CD8-positive, alpha-beta T cell (primary cell): ENCODE measurements at regions of chr5 and their contacts with region 1.

Region 1: DNA sequence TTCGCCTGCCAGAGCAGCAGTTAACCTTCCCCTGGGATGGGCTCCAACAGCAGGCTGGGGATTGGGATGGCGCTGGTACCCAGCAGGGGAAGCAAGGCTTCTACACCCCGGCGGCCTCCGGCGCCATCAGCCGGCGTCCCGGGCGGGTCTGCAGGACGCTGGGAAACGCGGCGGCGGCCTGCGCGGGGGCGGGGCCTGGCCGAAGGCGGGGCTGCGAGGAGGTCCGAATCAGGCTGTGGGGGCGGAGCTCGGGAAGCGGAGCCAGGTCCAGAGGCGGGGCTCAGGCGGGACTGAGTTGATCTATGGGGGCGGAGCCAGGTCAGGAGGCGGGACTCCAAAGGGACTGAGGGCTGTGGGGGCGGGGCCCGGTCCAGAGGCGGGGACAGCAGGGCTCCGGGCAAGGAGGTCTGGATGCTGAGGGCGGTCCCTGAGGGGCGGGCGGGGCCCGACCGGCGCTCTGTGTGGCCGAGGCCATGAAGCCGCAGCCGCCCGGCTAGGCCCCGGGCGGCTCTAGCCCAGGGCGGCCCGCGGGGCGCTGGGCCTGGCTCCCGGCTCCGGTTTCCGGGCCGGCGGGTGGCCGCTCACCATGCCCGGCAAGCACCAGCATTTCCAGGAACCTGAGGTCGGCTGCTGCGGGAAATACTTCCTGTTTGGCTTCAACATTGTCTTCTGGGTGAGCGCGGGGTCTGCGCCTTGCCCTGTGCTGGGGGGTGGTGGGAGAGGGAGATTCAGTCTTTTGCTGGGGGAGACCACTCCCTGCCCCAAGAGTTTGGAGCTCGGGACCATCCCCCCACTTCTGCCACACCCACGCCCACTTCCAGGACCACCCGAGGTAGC is at the start of gene TSPAN17:
- DNase-seq: peak; percentile 93 to 99 (median 99)
- ATAC-seq: peak; percentile 89
- H3K4me3 ChIP-seq: peak within 1 kb of the TSS; percentile 66 to 67
- H3K4me3 Mint-ChIP-seq: peak within 1 kb of the TSS; percentile 89
- H3K27ac ChIP-seq: peak within 1 kb of the TSS; percentile 45 to 72
- H3K27ac Mint-ChIP-seq: peak within 1 kb of the TSS; percentile 90
- H3K4me1 ChIP-seq: peaks cover 50% of the 10 kb centered on the region
- H3K4me1 Mint-ChIP-seq: peaks cover 53% of the 10 kb centered on the region
- H3K27me3 ChIP-seq: no peaks in the 10 kb centered on the region
- H3K27me3 Mint-ChIP-seq: no peaks in the 10 kb centered on the region
- CTCF ChIP-seq: no peak
- total RNA-seq, gene TSPAN17: 9.5 to 9.8 TPM

Region 2: DNA sequence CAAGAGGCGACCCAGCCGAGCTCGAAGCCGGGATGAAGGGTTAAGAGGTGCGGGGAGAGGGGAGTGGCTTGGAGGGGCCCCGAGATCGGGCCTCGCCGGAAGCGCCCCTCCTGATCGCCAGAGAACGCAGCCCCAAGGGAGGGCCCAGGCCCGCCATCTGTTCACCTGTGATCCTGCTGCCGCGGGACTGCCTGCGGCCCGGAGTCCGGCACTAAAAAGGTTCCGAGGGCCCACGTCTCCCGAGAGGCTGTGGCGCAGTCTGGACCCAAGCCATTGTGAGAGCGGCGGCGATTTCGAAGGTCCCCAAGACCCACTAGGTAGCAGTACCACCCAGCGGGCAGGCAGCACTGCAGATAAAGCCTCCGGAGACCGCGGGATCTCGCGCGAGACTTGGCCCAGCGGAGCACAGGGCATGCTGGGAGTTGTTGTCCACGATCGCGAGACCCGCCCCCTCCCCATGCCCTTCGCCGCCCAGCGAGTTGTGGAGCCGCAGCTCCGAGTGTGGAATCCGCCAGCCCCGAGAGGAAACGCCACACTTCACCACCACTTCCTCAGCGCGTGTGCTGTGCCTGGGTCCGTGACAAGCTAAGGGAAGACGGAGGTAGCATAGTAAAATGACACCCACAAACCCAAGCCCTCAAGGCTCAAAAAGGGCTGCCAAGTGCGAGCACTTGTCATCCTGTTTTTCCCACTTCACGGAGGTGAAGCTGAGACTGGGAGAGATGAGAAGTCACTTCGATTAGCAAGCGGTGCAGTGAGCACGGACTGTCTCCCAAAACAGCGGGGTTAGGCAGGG is 285.6 kb before region 1 on chr5 and contains the start of gene KIAA1191:
- CTCF ChIA-PET with region 1: interaction called, 5 read pairs
- POLR2A ChIA-PET with region 1: interaction called, 3 read pairs
- intact Hi-C with region 1: loop called in 1 of 2 experiments (anchors 5 kb)
- DNase-seq: peak; percentile 91 to 98 (median 95)
- ATAC-seq: peak; percentile 89
- H3K4me3 ChIP-seq: peak within 1 kb of the TSS; percentile 72 to 96
- H3K4me3 Mint-ChIP-seq: peak within 1 kb of the TSS; percentile 98
- H3K27ac ChIP-seq: peak within 1 kb of the TSS; percentile 68 to 86
- H3K27ac Mint-ChIP-seq: peak within 1 kb of the TSS; percentile 98
- H3K4me1 ChIP-seq: peaks cover 31% of the 10 kb centered on the region
- H3K4me1 Mint-ChIP-seq: peaks cover 41% of the 10 kb centered on the region
- H3K27me3 ChIP-seq: no peaks in the 10 kb centered on the region
- H3K27me3 Mint-ChIP-seq: no peaks in the 10 kb centered on the region
- CTCF ChIP-seq: no peak
- total RNA-seq, gene KIAA1191: 78.2 to 85.1 TPM

Region 3: GRCh38 chr5:176447982-176448608 is 199.2 kb before region 1 on chr5 and contains the start of gene FAF2:
- CTCF ChIA-PET with region 1: no interaction called
- POLR2A ChIA-PET with region 1: no interaction called
- intact Hi-C with region 1: loop called in 1 of 2 experiments (anchors 2 kb)
- DNase-seq: peak; percentile 94 to 100 (median 98)
- ATAC-seq: peak; percentile 96
- H3K4me3 ChIP-seq: peak within 1 kb of the TSS; percentile 75 to 86
- H3K4me3 Mint-ChIP-seq: peak within 1 kb of the TSS; percentile 99
- H3K27ac ChIP-seq: peak within 1 kb of the TSS; percentile 89 to 90
- H3K27ac Mint-ChIP-seq: peak within 1 kb of the TSS; percentile 99
- H3K4me1 ChIP-seq: peaks cover 26% of the 10 kb centered on the region
- H3K4me1 Mint-ChIP-seq: peaks cover 38% of the 10 kb centered on the region
- H3K27me3 ChIP-seq: no peaks in the 10 kb centered on the region
- H3K27me3 Mint-ChIP-seq: no peaks in the 10 kb centered on the region
- CTCF ChIP-seq: peak; percentile 92
- total RNA-seq, gene FAF2: 24.7 to 24.8 TPM

Region 4: GRCh38 chr5:176609724-176610434 is 37.4 kb before region 1 on chr5 and contains the start of gene GPRIN1:
- CTCF ChIA-PET with region 1: no interaction called
- POLR2A ChIA-PET with region 1: no interaction called
- intact Hi-C with region 1: loop called (anchors 2 to 5 kb)
- DNase-seq: peak in 7 of 9 experiments; percentile 38 to 71 (median 47)
- ATAC-seq: peak; percentile 69
- H3K4me3 ChIP-seq: peak within 1 kb of the TSS; percentile 53 to 65
- H3K4me3 Mint-ChIP-seq: peak within 1 kb of the TSS; percentile 90
- H3K27ac ChIP-seq: no peak within 1 kb of the TSS
- H3K27ac Mint-ChIP-seq: no peak within 1 kb of the TSS
- H3K4me1 ChIP-seq: peaks cover 7% of the 10 kb centered on the region
- H3K4me1 Mint-ChIP-seq: peaks cover 9% of the 10 kb centered on the region
- H3K27me3 ChIP-seq: peaks cover 0 to 5% of the 10 kb centered on the region in 2 experiments
- H3K27me3 Mint-ChIP-seq: peaks cover 27% of the 10 kb centered on the region
- CTCF ChIP-seq: no peak
- total RNA-seq, gene GPRIN1: 0.14 to 0.16 TPM

Region 5: GRCh38 chr5:176660860-176661641 is 13.8 kb after region 1 on chr5:
- CTCF ChIA-PET with region 1: interaction called, 72 read pairs
- POLR2A ChIA-PET with region 1: interaction called, 21 read pairs
- intact Hi-C with region 1: loop called in 1 of 2 experiments (anchors 2 kb)
- DNase-seq: peak; percentile 51 to 88 (median 77)
- ATAC-seq: peak; percentile 75
- H3K4me3 ChIP-seq: no peak overlapping the region
- H3K4me3 Mint-ChIP-seq: peak overlapping the region; percentile 42
- H3K27ac ChIP-seq: no peak overlapping the region
- H3K27ac Mint-ChIP-seq: peak overlapping the region; percentile 70
- H3K4me1 ChIP-seq: peaks cover 27% of the 10 kb centered on the region
- H3K4me1 Mint-ChIP-seq: peaks cover 30% of the 10 kb centered on the region
- H3K27me3 ChIP-seq: no peaks in the 10 kb centered on the region
- H3K27me3 Mint-ChIP-seq: peaks cover 8% of the 10 kb centered on the region
- CTCF ChIP-seq: peak; percentile 98

Region 6: DNA sequence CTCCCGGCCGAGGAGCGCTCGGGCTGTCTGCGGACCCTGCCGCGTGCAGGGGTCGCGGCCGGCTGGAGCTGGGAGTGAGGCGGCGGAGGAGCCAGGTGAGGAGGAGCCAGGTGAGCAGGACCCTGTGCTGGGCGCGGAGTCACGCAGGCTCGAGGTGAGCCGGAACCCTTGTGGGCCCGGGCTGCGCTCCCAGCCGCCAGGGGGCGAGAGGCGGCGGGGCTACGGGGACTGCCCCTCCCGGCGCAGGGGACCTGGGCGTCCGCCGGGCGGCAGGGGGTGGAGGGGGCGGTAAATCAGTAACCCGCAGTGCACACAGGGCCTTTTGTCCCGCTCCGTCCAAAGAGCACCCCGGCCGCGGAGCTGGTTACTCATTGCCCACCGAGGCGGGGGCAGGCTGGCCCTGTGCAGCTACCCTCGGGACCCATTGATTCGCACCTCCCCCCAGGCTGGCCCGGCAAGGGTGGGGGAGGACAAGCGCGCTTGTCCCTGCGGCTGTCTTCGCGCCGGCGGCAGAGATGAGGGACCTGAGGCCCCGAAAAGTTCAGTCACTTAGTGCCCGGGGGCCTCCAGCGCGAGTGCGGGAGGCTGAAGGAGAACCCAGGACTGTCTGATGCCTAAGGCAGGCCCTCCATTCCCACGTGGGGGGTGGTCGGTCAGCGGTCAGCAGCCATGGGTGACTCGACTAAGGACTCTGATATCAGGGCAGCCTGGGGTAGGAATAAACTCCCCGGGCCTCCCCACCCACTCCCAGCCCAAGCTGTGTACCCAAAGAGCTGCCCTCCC is 439.9 kb after region 1 on chr5:
- CTCF ChIA-PET with region 1: no interaction called
- POLR2A ChIA-PET with region 1: no interaction called
- intact Hi-C with region 1: loop called in 1 of 2 experiments (anchors 5 kb)
- DNase-seq: peak; percentile 35 to 83 (median 70)
- ATAC-seq: peak; percentile 82
- H3K4me3 ChIP-seq: peak overlapping the region; percentile 43 to 49
- H3K4me3 Mint-ChIP-seq: peak overlapping the region; percentile 49
- H3K27ac ChIP-seq: no peak overlapping the region
- H3K27ac Mint-ChIP-seq: no peak overlapping the region
- H3K4me1 ChIP-seq: peaks cover 10% of the 10 kb centered on the region
- H3K4me1 Mint-ChIP-seq: peaks cover 8% of the 10 kb centered on the region
- H3K27me3 ChIP-seq: peaks cover 0 to 2% of the 10 kb centered on the region in 2 experiments
- H3K27me3 Mint-ChIP-seq: peaks cover 20% of the 10 kb centered on the region
- CTCF ChIP-seq: peak; percentile 74